ENCODE measurements at regions of chrX and their contacts with region 1.

Region 1: GRCh38 chrX:1462596-1463251 is 10.0 kb upstream of the ASMTL start:
- DNase-seq: peak; percentile 81
- H3K4me3 Mint-ChIP-seq: peak overlapping the region; percentile 59
- H3K27ac Mint-ChIP-seq: peak overlapping the region; percentile 96
- H3K4me1 Mint-ChIP-seq: peaks cover 54% of the 10 kb centered on the region
- H3K27me3 Mint-ChIP-seq: no peaks in the 10 kb centered on the region

Region 2: DNA sequence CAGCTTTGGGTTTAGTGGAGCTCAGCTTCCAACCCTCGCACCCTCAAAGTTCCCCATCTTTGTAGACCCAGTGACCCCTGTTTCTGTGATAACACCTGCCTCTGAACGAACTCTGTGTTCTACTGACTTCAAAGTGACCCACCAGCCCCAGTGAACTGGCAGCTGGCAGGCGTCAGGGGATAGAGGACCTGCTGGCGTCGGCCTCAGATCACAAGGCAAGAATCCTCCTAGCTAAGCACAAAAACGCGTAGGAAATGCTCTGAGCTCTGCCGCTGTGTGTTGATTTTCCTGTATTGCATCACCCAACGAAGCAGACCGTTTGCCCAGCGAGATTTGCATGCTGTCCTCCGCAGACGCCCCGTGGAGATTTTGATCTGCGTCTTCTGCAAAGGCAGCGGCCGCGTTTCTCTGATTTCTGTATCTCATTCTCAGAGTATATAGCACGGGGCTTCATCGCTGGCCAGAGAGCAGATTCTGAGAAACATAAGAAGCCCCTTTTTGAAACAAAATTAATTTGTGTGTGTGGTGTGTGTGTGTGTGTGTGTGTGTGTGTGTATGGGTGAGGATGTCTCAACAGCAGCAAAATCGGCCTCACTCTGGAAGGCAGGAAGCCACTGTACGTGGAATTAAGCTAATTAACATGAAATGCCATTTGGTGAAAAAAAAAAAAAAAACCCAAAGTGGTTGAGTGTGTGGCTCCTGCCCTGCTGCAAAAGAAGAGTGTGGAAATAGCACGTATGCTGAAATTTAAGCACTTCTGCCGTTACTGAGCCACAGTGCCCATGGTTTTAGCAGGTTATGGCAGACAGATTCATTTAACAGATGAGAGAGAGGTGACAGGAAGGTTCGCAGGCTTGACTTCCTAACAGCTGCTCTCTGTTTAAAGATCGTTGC is 19.2 kb after region 1 on chrX:
- intact Hi-C with region 1: loop called (anchors 2 kb)
- DNase-seq: peak; percentile 83
- H3K4me3 Mint-ChIP-seq: peak overlapping the region; percentile 87
- H3K27ac Mint-ChIP-seq: peak overlapping the region; percentile 99
- H3K4me1 Mint-ChIP-seq: peaks cover 61% of the 10 kb centered on the region
- H3K27me3 Mint-ChIP-seq: no peaks in the 10 kb centered on the region

Region 3: DNA sequence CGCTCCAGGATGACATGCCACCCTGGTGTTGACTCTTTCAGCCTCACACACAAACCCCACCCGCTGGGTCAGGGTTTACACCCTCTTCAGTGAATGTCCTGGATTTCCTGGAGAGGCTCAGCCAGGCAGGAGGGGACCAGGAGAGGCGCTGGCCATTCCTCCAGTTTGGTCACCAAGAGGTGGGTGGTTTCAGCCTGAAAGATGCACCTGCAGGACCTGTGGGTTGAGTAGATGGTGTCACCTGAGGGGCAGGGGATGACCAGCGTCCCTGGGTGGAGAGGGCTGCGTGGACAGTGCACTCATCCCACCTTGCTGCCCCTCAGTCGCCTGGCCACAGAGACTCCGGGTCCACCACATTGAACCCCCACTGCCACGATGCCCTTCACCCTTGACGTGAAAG is 331.9 kb after region 1 on chrX:
- intact Hi-C with region 1: no loop called
- DNase-seq: no peak
- H3K4me3 Mint-ChIP-seq: no peak overlapping the region
- H3K27ac Mint-ChIP-seq: no peak overlapping the region
- H3K4me1 Mint-ChIP-seq: no peaks in the 10 kb centered on the region
- H3K27me3 Mint-ChIP-seq: no peaks in the 10 kb centered on the region

Region 4: GRCh38 chrX:2707334-2707760 is 1244.6 kb after region 1 on chrX:
- intact Hi-C with region 1: loop called (anchors 5 kb)
- DNase-seq: peak; percentile 52
- H3K4me3 Mint-ChIP-seq: peak overlapping the region; percentile 45
- H3K27ac Mint-ChIP-seq: peak overlapping the region; percentile 98
- H3K4me1 Mint-ChIP-seq: peaks cover 79% of the 10 kb centered on the region
- H3K27me3 Mint-ChIP-seq: no peaks in the 10 kb centered on the region

Measured in activated T-helper 2 cell treated with anti-CD3 and anti-CD28 coated beads, Interferon-gamma antibody, Interleukin-2, Interleukin-4, amounts not matched to agents 10 μg/mL and 5 μg/mL and 100 μg/mL, durations not matched to agents 14 hours and 24 hours and 36 hours (primary cell).